ENCODE measurements at regions of chr1 and their contacts with region 1.

Region 1: DNA sequence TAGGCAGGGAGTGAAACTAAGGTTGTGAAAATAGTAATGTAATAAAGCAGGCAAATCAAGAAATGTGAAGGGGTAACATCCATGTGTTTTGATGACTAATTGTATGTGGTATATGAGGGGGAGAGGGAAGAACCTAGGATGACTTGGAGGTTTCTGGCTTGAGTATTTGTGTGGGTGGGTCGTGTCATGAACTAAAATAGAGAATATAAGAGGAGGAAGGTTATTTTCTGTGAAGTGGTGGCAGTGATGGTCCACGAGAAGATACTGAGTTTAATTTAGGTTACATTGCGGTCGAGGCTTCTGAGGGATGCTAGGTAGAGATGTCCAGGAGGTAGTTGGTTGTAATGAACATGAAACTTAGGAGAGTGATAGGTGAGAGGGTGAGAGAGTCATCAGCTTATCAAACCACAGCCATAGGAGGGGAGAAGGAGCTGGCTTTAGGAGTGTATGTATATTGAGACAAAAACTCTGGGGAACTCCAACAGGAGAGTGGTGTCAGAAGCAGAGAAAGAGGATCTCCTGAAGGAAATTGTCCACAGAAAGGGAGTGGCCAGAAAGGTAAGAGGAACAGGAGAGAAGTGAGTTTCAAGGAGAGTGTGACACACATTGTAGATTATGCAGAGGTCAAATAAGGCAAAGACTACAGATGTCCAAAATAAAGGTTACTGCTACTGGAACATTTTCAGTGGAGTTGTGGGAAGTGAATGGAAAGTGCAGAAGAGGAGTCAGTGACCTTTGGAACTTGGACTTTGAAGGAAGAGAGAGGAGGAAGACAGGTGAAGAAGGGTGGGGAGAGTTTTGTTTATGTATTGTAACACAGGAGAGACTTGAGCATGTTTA is 89.0 kb upstream of the MACF1 start:
- DNase-seq: no peak
- H3K4me3 Mint-ChIP-seq: no peak overlapping the region
- H3K27ac Mint-ChIP-seq: no peak overlapping the region
- H3K4me1 Mint-ChIP-seq: peaks cover 6% of the 10 kb centered on the region
- H3K27me3 Mint-ChIP-seq: peaks cover 6% of the 10 kb centered on the region

Region 2: GRCh38 chr1:39105061-39105840 is 10.2 kb before region 1 on chr1:
- intact Hi-C with region 1: loop called (anchors 1 kb)
- DNase-seq: peak; percentile 92
- H3K4me3 Mint-ChIP-seq: no peak overlapping the region
- H3K27ac Mint-ChIP-seq: peak overlapping the region; percentile 48
- H3K4me1 Mint-ChIP-seq: peaks cover 32% of the 10 kb centered on the region
- H3K27me3 Mint-ChIP-seq: peaks cover 8% of the 10 kb centered on the region

Region 3: DNA sequence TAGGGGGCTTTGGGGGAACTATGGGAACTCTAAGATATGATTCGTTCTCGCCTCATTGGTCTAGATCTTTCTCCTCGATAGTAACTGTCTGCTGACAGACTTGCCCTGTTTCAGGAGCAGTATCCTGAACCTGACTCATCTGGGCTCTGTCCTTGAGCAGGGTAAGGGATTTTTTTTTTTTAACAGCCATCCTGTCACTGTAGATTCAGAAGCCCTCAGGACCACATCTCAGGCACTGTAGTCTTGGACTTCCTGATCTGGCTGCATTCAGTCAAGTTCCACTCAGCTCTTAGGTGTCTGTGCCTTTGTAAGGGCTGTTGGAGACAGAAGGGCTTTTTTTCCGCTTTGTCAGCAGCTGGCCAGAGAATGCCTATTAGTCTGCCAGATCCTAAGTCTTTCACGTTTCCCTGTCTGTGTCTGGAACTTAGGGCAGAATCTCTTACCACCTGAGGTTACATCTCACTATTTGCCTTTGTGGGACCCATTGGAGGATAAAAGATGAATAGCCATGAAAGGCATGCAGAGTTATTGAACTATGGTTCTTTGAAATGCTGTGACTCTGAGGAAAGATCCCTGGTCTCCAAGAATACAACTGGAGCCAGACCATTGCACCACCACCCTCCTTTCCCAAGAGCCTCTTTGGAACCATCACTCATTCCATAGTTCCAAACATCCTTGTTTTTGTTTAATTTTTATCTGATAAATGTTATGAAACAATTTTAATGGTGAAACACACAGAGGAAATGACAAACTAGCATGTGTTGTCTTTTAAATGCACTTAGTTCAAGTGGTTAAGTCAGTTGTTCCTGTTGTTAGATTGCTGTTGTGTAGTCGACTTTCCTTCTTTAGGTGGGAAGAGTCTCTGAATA is 39.3 kb after region 1 on chr1:
- intact Hi-C with region 1: no loop called
- DNase-seq: no peak
- H3K4me3 Mint-ChIP-seq: no peak overlapping the region
- H3K27ac Mint-ChIP-seq: no peak overlapping the region
- H3K4me1 Mint-ChIP-seq: peaks cover 7% of the 10 kb centered on the region
- H3K27me3 Mint-ChIP-seq: peaks cover 12% of the 10 kb centered on the region

Region 4: DNA sequence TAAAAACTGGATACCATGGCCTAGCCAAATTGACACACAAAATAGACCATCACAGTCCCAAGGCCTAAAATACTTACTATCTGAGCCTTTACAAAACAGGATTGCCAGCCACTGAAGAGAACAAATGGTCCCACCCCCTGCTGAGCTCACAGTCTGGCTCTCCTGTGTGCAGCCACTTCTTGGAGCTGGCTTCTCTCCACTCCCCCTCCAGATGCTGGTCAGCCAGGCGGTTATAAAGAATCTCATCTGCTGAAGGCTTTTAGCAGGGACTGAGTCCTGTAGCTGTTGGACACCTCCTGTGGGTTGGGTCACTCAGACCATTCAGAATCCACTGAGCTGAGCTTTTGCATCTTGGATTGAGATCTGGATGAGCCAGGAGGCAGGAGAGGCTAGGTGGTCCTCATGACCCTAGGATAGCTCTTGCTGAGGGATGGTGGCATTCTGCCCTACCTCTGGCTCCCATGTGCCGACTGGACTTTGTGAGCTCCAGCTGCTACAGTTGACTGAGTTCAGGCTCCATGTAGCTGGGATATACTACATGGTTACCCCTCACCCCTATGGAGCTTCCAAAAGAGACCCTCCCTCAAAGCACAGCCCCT is 639.5 kb after region 1 on chr1:
- intact Hi-C with region 1: no loop called
- DNase-seq: no peak
- H3K4me3 Mint-ChIP-seq: no peak overlapping the region
- H3K27ac Mint-ChIP-seq: no peak overlapping the region
- H3K4me1 Mint-ChIP-seq: peaks cover 1% of the 10 kb centered on the region
- H3K27me3 Mint-ChIP-seq: no peaks in the 10 kb centered on the region